Sigmoid colon (tissue), 7 donors: ENCODE measurements at regions of chr2 and their contacts with region 1.

Region 1: GRCh38 chr2:8872821-8873432 is 35.5 kb upstream of the KIDINS220 start:
- DNase-seq: no peak
- H3K4me3 ChIP-seq: no peak overlapping the region
- H3K27ac ChIP-seq: no peak overlapping the region
- H3K4me1 ChIP-seq: no peaks in the 10 kb centered on the region
- H3K27me3 ChIP-seq: no peaks in the 10 kb centered on the region
- CTCF ChIP-seq: peak in 3 of 4 experiments; percentile 18 to 53 (median 43)
- EP300 ChIP-seq: no peak
- POLR2A ChIP-seq: no peak

Region 2: DNA sequence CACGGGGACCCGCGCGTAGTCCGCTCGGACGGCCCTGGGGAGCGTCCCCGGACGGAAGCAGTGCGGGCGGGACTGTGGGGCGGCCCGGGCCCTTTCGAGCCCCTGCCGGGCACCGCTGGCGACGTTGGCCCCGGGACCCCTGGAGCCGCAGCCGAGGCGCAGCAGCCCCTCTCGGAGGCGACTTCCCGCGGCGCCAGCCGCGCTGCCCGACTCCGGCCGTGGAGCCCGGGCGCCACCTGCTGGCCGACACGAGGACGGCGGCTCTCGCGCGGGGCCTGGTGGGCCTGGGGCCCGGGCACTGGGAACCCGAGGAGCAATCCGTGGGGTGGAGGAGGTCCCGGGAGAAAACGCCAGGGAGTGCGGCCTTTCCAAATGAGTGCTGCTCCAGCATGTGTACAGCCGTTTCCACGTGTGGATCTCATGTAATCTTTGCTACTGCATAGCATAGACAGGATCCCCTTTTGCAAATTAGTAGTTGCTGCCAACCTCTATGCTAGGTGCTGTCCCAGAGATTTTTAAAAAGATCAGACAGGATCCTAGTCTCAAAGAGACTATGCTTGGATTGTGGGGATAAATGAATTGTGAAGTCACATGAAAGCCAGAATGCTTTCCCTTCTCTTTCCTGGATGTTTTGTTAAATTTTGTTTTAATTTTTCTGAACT is 187.1 kb before region 1 on chr2:
- intact Hi-C with region 1: no loop called
- DNase-seq: peak; percentile 85
- H3K4me3 ChIP-seq: peak overlapping the region; percentile 70 to 96 (median 86)
- H3K27ac ChIP-seq: peak overlapping the region; percentile 89 to 96 (median 90)
- H3K4me1 ChIP-seq: peaks cover 0 to 17% (median 14%) of the 10 kb centered on the region in 4 donors
- H3K27me3 ChIP-seq: no peaks in the 10 kb centered on the region
- CTCF ChIP-seq: peak; percentile 51 to 100 (median 78)
- EP300 ChIP-seq: no peak
- POLR2A ChIP-seq: no peak

Region 3: DNA sequence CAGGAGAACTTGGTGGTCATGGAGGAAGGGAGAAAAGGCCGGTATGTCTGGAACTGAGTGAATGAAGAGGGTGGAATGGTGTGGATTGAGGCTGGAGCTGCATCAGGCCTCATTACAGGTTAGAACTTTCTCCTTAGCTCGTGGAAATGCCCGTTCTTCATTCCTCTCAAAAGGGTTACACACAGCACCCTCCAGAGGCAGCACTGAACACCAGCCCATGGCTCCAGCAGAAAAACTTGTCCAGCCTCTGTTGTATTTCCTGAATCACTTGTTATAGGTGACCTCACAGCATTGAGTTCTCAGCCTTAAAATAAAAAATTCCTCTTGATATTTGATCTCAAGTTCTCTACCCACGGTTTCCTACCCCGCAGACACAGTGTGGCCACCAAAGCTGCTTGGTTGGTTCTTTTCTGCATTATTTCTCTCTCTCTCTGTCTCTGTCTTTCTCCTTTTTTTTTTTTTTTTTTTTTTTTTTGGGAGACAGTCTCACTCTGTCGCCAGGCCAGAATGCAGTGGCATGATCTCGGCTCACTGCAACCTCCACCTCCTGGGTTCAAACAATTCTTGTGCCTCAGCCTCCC is 460.8 kb after region 1 on chr2:
- intact Hi-C with region 1: loop called (anchors 10 kb)
- DNase-seq: peak; percentile 81
- H3K4me3 ChIP-seq: no peak overlapping the region
- H3K27ac ChIP-seq: peak overlapping the region in 3 of 4 donors; percentile 18 to 73 (median 60)
- H3K4me1 ChIP-seq: peaks cover 0 to 38% (median 14%) of the 10 kb centered on the region in 4 donors
- H3K27me3 ChIP-seq: no peaks in the 10 kb centered on the region
- CTCF ChIP-seq: peak; percentile 52 to 85 (median 67)
- EP300 ChIP-seq: no peak
- POLR2A ChIP-seq: no peak